Heart right ventricle (tissue), 16 donors: ENCODE measurements at regions of chr18 and their contacts with region 1.

Region 1: DNA sequence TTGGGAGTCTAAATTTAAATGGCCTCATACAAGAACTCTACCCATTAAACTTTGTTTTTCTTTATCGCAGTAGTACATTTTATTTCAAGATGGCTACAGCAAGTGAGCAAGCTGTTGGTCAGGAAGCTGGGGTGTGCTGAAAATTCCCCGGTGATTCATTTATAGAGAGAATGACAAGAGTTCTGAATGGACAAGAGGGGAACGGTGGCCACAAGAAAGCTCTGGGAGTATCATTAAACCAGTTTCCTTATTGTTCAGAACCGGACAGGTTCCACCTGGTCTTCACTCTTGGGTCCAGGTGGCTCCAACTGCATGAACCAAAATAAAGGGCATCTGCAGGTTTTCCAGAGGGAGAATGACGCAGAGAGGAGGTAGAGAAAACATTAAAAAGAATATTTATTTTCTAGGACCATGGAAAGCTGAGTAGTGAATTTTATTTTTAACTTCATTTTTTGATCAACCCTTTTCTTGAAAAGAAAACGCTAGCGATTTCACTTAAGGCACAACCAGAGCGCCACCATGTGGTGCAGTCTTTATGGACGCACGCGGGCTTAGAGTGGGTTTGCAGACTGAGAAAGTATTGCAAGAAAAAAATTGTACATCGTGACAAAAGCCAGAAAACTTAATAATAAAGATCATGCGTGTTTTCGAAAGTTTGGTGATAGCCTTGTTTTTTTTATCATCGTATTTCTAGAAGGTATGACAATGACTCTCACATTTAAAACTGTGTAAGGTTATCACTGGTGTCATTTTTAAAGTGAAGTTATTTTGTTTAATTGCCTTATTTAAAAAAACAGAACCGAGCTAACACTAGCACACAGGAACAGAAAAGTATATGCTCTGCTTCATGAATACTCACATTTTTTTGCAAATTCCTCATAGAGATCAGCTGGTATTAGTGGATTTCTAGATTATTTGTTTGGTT is 97.9 kb upstream of the NOL4 start:
- DNase-seq: peak in 1 of 2 donors; percentile 15
- ATAC-seq: no peak
- H3K4me3 ChIP-seq: no peak overlapping the region
- H3K27ac ChIP-seq: no peak overlapping the region
- H3K4me1 ChIP-seq: no peaks in the 10 kb centered on the region
- H3K27me3 ChIP-seq: peaks cover 0 to 3% (median 0%) of the 10 kb centered on the region in 7 donors
- CTCF ChIP-seq: peak; percentile 15 to 71 (median 61)

Region 2: DNA sequence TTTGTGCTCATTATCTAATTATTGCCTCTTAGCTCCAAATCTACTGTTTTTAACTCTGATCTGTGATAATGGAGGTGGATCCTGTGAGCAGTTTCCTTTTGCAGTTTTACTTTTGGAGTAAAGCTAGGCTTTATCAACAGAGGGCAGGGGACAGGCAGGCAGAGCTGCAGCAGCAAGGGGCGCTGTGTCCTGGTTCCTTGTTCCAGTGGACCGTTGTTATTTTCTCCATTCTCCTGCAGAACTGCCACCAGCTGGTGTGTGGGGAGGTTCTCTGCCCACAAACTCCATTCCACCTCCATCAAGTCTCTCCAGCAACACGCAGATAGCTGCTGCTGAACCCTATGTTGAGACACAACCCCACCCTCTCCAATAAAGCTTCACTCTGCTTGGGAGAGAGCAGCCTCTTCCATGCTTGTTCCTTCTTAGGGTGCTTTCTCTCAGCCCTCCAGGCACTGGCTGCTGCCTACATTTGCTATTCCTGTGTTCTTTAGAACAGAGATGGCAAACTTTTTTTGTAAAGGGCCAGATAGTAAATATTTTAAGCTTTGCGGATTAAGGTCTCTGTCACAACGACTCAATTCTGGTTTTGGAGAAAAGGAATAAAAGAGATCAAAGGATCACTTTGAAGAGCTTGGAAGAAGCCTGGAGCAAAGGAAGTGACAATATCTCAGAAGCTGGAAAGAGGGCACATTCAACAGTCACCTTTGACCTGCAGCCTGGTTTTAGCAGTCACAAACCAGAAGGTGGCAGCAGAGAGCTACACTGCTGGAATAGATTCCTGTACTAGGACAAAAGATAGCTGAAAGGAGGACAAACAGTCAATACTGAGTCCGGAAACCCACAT is 1090.9 kb before region 1 on chr18:
- intact Hi-C with region 1: loop called in 1 of 10 experiments (anchors 10 kb)
- DNase-seq: peak; percentile 11 to 69
- ATAC-seq: peak in 6 of 8 donors; percentile 51 to 76 (median 54)
- H3K4me3 ChIP-seq: no peak overlapping the region
- H3K27ac ChIP-seq: no peak overlapping the region
- H3K4me1 ChIP-seq: no peaks in the 10 kb centered on the region
- H3K27me3 ChIP-seq: no peaks in the 10 kb centered on the region
- CTCF ChIP-seq: peak; percentile 66 to 92 (median 86)

Region 3: GRCh38 chr18:33751613-33752221 is 570.9 kb before region 1 on chr18:
- intact Hi-C with region 1: loop called in 1 of 10 experiments (anchors 10 kb)
- DNase-seq: no peak
- ATAC-seq: no peak
- H3K4me3 ChIP-seq: no peak overlapping the region
- H3K27ac ChIP-seq: no peak overlapping the region
- H3K4me1 ChIP-seq: peaks cover 0 to 9% (median 0%) of the 10 kb centered on the region in 9 donors
- H3K27me3 ChIP-seq: no peaks in the 10 kb centered on the region
- CTCF ChIP-seq: peak in 8 of 9 donors; percentile 30 to 56 (median 46)

Region 4: GRCh38 chr18:34122724-34123334 is 199.8 kb before region 1 on chr18:
- intact Hi-C with region 1: loop called in 8 of 10 experiments (anchors 2 to 10 kb)
- DNase-seq: peak in 1 of 2 donors; percentile 7
- ATAC-seq: peak in 1 of 8 donors; percentile 61
- H3K4me3 ChIP-seq: no peak overlapping the region
- H3K27ac ChIP-seq: no peak overlapping the region
- H3K4me1 ChIP-seq: no peaks in the 10 kb centered on the region
- H3K27me3 ChIP-seq: no peaks in the 10 kb centered on the region
- CTCF ChIP-seq: peak; percentile 46 to 93 (median 79)

Region 5: DNA sequence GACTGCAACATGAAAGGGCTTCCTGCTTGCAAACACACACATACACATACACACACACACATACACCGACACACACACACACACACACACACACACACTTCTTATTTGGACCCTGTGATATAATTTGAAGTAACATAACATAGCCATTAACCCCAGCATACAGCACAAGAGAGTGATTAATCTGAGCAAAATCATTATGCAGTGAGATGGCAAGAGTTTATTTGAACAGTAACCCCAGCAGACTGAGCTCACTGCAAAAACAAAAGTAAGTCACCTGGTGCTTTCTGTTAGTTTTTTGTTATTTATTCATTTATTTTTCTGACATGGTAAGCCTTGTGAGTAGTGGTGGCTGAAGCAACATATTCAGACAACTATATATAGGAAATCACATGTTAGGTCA is 191.6 kb before region 1 on chr18:
- intact Hi-C with region 1: loop called in 3 of 10 experiments (anchors 5 to 10 kb)
- DNase-seq: no peak
- ATAC-seq: no peak
- H3K4me3 ChIP-seq: no peak overlapping the region
- H3K27ac ChIP-seq: no peak overlapping the region
- H3K4me1 ChIP-seq: no peaks in the 10 kb centered on the region
- H3K27me3 ChIP-seq: no peaks in the 10 kb centered on the region
- CTCF ChIP-seq: no peak

Region 6: GRCh38 chr18:34281722-34282121 is 40.9 kb before region 1 on chr18:
- intact Hi-C with region 1: no loop called
- DNase-seq: no peak
- ATAC-seq: no peak
- H3K4me3 ChIP-seq: no peak overlapping the region
- H3K27ac ChIP-seq: no peak overlapping the region
- H3K4me1 ChIP-seq: no peaks in the 10 kb centered on the region
- H3K27me3 ChIP-seq: peaks cover 0 to 4% (median 0%) of the 10 kb centered on the region in 7 donors
- CTCF ChIP-seq: no peak